ENCODE measurements at regions of chr15 and their contacts with region 1.

Region 1: GRCh38 chr15:73734839-73735238 is 18.3 kb downstream of the INSYN1 start:
- H3K4me3 Mint-ChIP-seq: no peak overlapping the region
- H3K27ac Mint-ChIP-seq: no peak overlapping the region
- H3K4me1 Mint-ChIP-seq: no peaks in the 10 kb centered on the region
- H3K27me3 Mint-ChIP-seq: peaks cover 6% of the 10 kb centered on the region

Region 2: DNA sequence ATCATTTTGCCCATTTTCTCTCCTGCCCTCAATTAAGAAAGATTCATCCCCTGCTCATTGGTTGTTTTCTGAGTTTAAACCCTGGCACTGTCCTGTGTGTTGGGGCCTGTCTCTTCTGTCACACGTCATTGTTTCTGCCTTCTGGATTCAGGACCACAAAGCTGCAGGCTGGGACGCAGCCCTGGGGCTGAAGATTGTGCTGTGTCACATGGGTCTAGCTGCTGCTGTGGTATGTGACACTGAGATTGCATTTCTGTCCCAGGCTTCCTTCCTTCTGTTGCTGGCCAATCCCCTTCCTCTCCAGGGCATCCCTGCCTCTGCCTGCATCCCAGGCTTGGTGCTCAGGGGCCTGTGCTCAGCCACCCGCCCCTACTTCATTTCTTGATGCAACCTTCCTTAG is 10.6 kb before region 1 on chr15:
- intact Hi-C with region 1: loop called (anchors 1 kb)
- H3K4me3 Mint-ChIP-seq: no peak overlapping the region
- H3K27ac Mint-ChIP-seq: no peak overlapping the region
- H3K4me1 Mint-ChIP-seq: peaks cover 6% of the 10 kb centered on the region
- H3K27me3 Mint-ChIP-seq: peaks cover 6% of the 10 kb centered on the region

Measured in dendritic cell treated with granulocyte-macrophage colony-stimulating factor and Interleukin-4, amounts not matched to agents 40 ng/mL and 50 ng/mL, for 4 days (primary cell).